Sigmoid colon (tissue), 7 donors: ENCODE measurements at regions of chr5 and their contacts with region 1.

Region 1: DNA sequence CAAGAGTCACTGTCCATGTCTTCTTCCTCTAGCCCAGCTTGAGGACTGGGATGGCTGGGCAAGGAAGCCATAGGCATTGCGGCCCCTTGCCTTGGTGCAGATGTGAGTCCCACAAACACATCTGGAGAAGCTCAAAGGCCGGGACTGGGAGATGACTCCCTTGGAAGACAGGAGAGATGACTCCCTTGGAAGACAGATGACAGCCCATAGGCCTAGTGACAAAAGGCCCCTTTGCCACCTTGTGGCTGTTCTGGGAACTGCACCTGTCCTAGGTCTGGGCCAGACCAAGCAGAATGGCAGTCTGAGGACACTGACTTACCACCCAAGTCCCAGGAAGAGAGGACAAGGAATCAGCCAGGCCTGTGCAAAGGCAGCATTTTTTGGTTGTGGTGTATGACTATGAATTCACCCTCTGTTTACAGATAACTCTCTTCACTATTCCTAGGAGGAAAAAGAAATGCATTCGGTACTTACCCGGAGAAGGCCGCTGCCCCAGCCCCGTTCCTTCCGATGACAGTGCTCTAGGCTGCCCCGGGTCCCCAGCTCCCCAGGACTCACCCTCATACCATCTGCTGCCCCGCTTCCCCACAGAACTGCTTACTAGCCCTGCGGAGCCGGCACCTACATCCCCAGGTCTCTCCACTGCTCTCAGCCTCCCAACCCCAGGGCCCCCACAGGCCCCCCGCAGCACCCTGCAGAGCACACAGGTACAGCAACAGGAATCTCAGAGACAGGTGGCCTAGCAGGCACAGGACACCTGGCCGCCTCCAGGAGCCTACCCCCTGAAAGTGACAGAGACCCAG is 30.8 kb downstream of the SKP1 start:
- DNase-seq: peak; percentile 84
- H3K4me3 ChIP-seq: no peak overlapping the region
- H3K27ac ChIP-seq: no peak overlapping the region
- H3K4me1 ChIP-seq: peaks cover 0 to 20% (median 16%) of the 10 kb centered on the region in 4 donors
- H3K27me3 ChIP-seq: no peaks in the 10 kb centered on the region
- CTCF ChIP-seq: peak; percentile 69 to 96 (median 80)
- EP300 ChIP-seq: no peak
- POLR2A ChIP-seq: no peak

Region 2: DNA sequence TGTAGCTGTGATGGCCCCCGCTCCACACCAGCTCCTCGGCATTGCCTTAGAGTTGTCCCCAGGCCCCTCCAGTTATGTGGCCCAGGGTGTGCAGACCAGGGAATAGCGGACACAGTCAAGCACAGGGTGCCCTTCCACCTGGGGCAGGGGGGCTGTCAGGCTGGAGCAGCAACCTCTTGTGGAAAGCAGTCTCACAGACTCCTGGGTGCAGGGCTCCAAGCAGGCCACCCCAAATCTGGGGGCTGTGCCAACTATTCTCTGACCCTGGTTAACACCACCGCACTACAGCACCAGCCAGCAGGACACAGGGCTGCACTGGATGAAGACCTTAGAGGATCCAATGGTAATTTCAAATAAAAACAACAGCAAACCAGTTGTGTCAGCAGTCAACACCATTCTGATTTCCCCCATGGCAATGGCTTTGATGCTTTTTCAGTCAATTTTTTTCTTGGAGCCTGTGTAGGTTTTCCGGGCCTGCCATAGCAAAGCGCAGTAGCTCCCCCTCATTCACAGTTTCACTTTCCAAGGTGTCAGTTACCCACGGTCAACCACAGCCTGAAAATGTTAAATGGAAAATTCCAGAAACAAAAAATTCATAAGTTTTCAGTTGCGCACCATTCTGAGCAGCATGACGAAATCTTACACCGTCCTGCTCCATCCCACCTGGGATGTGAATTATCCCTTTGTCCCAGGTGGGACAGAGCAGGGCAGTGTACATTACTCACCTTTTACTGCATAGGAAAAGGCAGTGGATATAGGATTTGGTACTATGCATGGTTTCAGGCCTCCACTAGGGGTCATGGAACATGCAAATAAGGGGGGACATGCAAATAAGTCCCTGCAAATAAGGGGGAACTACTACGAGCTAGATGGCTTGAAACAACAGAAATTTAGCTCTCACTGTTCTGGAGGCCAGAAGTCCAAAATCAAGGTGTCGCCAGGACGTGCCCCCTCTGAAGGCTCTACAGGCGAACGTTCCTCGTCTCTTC is 226.5 kb before region 1 on chr5:
- intact Hi-C with region 1: no loop called
- DNase-seq: no peak
- H3K4me3 ChIP-seq: no peak overlapping the region
- H3K27ac ChIP-seq: no peak overlapping the region
- H3K4me1 ChIP-seq: no peaks in the 10 kb centered on the region
- H3K27me3 ChIP-seq: no peaks in the 10 kb centered on the region
- CTCF ChIP-seq: no peak
- EP300 ChIP-seq: no peak
- POLR2A ChIP-seq: no peak

Region 3: GRCh38 chr5:134041570-134042411 is 104.2 kb before region 1 on chr5:
- intact Hi-C with region 1: loop called (anchors 2 kb)
- DNase-seq: no peak
- H3K4me3 ChIP-seq: no peak overlapping the region
- H3K27ac ChIP-seq: no peak overlapping the region
- H3K4me1 ChIP-seq: no peaks in the 10 kb centered on the region
- H3K27me3 ChIP-seq: no peaks in the 10 kb centered on the region
- CTCF ChIP-seq: no peak
- EP300 ChIP-seq: no peak
- POLR2A ChIP-seq: no peak